BJ (cell line): ENCODE measurements at regions of chr22 and their contacts with region 1.

Region 1: GRCh38 chr22:37199103-37199759 is 11.2 kb upstream of the C1QTNF6 start:
- DNase-seq: peak; percentile 84
- H3K4me3 ChIP-seq: peak overlapping the region; percentile 66
- H3K27me3 ChIP-seq: no peaks in the 10 kb centered on the region
- CTCF ChIP-seq: peak; percentile 97

Region 2: GRCh38 chr22:37115032-37115431 is 84.2 kb before region 1 on chr22:
- CTCF ChIA-PET with region 1: no interaction called
- POLR2A ChIA-PET with region 1: no interaction called
- DNase-seq: no peak
- H3K4me3 ChIP-seq: no peak overlapping the region
- H3K27me3 ChIP-seq: peaks cover 12% of the 10 kb centered on the region
- CTCF ChIP-seq: no peak

Region 3: GRCh38 chr22:37157516-37158289 is 41.5 kb before region 1 on chr22:
- CTCF ChIA-PET with region 1: interaction called, 161 read pairs
- POLR2A ChIA-PET with region 1: no interaction called
- DNase-seq: no peak
- H3K4me3 ChIP-seq: no peak overlapping the region
- H3K27me3 ChIP-seq: peaks cover 9% of the 10 kb centered on the region
- CTCF ChIP-seq: no peak

Region 4: DNA sequence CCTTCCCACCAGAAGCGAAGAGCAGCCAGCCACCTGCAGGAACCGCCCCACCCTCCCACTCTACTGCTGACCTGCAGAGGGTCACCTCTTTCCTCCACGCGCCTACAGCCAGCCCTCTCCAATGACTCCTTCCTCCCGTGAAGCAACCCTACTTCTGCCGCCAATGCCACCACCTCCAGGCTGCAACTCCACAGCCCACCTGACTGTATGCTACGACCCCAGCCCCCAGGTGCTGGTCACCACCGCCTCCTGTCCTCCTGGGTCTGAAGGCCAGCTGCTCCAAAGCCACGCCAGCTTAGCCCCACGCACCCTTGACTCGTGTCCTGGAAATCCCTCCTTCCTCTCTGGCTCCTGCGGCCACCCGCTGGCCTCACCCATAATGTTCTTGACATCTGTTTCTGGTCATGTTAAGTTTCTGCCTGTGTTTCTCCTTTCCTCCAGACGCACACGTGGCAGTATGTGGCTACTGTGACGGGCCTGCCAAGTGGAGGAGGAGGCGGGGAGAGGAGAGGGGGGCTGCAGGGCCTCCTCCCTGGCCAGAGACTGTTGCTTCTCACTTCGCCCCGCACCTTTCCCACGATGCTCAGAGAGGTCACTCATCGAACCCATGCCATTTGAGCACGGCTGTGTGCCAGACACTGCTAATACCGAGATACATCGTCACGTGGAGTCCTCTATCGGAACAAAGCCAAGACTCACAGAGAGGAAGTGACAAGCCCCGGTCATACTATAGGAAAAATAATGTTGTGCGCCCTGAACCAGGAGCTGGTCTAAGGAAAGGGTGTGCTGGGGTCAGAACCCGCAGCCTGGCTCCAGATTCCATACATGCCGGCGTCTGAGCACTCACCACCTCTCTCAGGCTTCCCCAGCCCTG is 22.8 kb before region 1 on chr22:
- CTCF ChIA-PET with region 1: interaction called, 56 read pairs
- POLR2A ChIA-PET with region 1: no interaction called
- DNase-seq: no peak
- H3K4me3 ChIP-seq: no peak overlapping the region
- H3K27me3 ChIP-seq: peaks cover 3% of the 10 kb centered on the region
- CTCF ChIP-seq: 0 out of 2 replicates have a peak, but pooled peaks have one; percentile 1

Region 5: DNA sequence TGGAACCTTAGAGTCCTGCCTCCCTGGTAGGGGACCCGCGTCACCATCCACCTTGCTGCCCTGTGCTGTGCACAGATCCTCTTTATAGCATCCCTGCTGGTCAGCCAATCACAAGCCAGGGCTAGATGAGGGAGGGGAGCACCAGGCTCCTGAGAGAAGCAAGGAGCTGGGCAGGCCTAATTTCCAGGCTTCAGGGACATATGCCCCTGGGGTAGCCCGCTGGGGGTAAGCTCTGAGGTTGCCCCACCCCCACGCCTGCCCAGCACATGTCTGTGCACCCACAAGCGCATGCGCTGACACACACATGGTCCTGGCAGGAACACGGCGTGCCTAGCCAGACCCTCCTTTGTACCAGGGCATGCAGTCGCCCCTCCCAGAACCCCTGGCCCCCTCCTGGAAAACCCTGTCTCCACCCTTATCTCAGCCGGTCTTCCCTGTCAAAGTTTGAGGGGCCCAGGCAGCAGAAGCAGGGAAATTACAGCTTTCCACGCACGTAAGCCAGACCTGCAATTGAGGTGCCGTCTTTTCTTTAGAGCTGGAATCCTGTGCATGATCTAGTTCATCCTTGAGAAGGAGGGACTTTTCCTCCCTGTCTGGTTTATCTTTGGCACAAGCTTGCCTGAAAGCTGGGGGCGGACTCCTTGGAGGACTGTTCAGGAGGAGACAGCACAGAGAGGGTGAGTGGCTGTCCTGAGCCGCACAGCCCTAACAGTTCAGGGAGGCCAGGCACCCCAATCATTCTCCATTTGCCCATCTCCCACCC is 11.0 kb after region 1 on chr22:
- CTCF ChIA-PET with region 1: interaction called, 28 read pairs
- POLR2A ChIA-PET with region 1: no interaction called
- DNase-seq: no peak
- H3K4me3 ChIP-seq: no peak overlapping the region
- H3K27me3 ChIP-seq: peaks cover 19% of the 10 kb centered on the region
- CTCF ChIP-seq: no peak

Region 6: GRCh38 chr22:37229805-37230672 is 30.8 kb after region 1 on chr22:
- CTCF ChIA-PET with region 1: interaction called, 12 read pairs
- POLR2A ChIA-PET with region 1: no interaction called
- DNase-seq: peak; percentile 28
- H3K4me3 ChIP-seq: no peak overlapping the region
- H3K27me3 ChIP-seq: no peaks in the 10 kb centered on the region
- CTCF ChIP-seq: no peak

Region 7: GRCh38 chr22:37287550-37287951 is 88.3 kb after region 1 on chr22:
- CTCF ChIA-PET with region 1: no interaction called
- POLR2A ChIA-PET with region 1: no interaction called
- DNase-seq: no peak
- H3K4me3 ChIP-seq: no peak overlapping the region
- H3K27me3 ChIP-seq: peaks cover 3% of the 10 kb centered on the region
- CTCF ChIP-seq: no peak

Region 8: DNA sequence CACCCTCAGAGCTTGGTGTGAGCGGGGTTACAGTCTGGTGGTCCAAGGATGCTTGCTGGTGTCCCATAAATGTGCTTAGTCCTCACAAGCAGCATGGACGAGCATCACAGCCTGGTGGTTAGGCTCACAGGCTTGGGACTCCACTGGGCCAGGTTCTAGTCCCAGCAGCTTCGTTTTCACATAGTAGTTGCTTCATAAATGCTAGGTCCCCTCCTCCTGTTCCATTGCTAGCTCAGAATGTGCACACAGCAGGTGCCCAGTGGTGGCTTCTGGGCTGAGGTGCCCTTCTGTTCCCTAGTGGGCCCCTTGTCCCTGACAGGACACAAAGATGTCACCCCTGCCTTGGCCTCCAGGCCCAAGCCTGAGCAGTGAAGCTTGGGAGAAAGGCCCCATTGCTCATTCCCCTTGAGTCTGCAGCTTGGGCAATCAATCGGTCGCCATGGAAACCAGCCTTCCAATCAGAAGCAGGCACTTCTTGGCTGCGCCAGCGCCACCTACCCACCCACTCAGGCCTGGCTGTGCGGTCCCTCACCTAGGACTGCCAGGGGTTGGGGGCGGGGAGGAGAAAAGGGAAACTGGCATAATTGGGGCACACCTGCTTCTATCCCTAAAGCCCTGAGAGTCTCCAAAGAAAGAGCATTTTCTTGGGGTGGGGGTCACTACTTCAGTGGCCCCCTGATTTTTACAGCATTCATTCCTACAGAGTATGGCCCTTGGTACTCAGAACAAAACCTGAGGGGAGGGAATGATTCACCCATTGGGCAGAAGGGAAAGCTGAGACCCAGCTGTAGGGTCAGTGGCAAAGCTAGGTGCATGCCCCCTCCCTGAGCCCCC is 131.2 kb after region 1 on chr22:
- CTCF ChIA-PET with region 1: no interaction called
- POLR2A ChIA-PET with region 1: no interaction called
- DNase-seq: no peak
- H3K4me3 ChIP-seq: no peak overlapping the region
- H3K27me3 ChIP-seq: peaks cover 14% of the 10 kb centered on the region
- CTCF ChIP-seq: peak; percentile 23

Region 9: GRCh38 chr22:37508431-37508992 is 309.3 kb after region 1 on chr22:
- CTCF ChIA-PET with region 1: no interaction called
- POLR2A ChIA-PET with region 1: no interaction called
- DNase-seq: no peak
- H3K4me3 ChIP-seq: no peak overlapping the region
- H3K27me3 ChIP-seq: no peaks in the 10 kb centered on the region
- CTCF ChIP-seq: no peak